ENCODE measurements at regions of chr11 and their contacts with region 1.

Region 1: DNA sequence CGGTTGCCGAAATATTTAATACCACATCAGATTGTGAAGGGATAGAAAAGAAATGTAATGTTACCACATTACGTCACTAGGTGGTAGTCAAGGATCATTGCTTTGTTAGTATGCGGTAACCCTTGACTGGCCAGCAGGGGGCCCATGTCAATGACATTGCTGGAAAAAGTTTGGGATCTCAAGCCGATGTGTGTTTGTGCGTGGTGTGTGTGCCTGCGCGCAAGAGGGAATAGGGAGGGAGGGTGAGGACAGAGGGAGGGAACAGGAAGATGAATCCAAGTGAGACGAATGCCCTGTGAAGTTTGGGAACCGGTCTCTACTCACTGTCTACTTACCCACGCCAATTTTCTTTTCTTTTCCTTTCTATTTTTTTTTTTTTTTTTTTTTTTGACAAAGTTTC is 10.7 kb upstream of the MRGPRX2 start:
- DNase-seq: peak; percentile 36
- H3K4me3 ChIP-seq: 0 out of 2 replicates have a peak overlapping the region, but pooled peaks have one; percentile 3
- H3K27me3 ChIP-seq: peaks cover 3% of the 10 kb centered on the region; the same call in 1 of the 2 replicates
- CTCF ChIP-seq: peak; percentile 96

Region 2: GRCh38 chr11:18994860-18995259 is 76.4 kb before region 1 on chr11:
- CTCF ChIA-PET with region 1: no interaction called
- POLR2A ChIA-PET with region 1: no interaction called
- DNase-seq: no peak
- H3K4me3 ChIP-seq: no peak overlapping the region
- H3K27me3 ChIP-seq: no peaks in the 10 kb centered on the region
- CTCF ChIP-seq: no peak

Region 3: GRCh38 chr11:19087658-19088057 is 16.4 kb after region 1 on chr11:
- CTCF ChIA-PET with region 1: interaction called, 10 read pairs
- POLR2A ChIA-PET with region 1: no interaction called
- DNase-seq: peak; percentile 49
- H3K4me3 ChIP-seq: no peak overlapping the region
- H3K27me3 ChIP-seq: no peaks in the 10 kb centered on the region; the same call in 1 of the 2 replicates
- CTCF ChIP-seq: no peak

Region 4: DNA sequence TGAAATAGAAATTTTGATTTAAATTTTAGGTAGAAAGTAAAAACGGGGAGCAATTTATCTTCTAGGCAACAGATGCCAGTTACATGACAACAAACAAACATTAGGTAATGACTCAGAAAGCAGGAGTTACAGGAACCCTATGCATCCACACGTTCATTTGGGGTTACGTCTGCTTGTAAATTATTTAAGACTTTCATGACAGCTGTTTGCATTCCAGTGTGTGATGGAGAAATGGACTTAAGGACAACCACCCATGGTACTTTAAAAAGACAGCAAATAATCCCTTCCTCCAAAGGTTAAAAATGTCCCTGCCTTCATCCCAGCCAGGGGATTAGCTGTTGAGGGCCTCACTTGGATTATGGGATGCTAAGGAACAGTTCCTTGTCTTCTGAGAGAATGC is 157.7 kb after region 1 on chr11:
- CTCF ChIA-PET with region 1: no interaction called
- POLR2A ChIA-PET with region 1: no interaction called
- DNase-seq: no peak
- H3K4me3 ChIP-seq: no peak overlapping the region
- H3K27me3 ChIP-seq: no peaks in the 10 kb centered on the region
- CTCF ChIP-seq: no peak